Right ventricle myocardium inferior (tissue), 1 donor: ENCODE measurements at regions of chr11 and their contacts with region 1.

Region 1: GRCh38 chr11:29458252-29458651 is 558.6 kb downstream of the KCNA4 start:
- DNase-seq: no peak
- ATAC-seq: no peak

Region 2: GRCh38 chr11:28767574-28767973 is 690.7 kb before region 1 on chr11:
- intact Hi-C with region 1: no loop called
- DNase-seq: no peak
- ATAC-seq: no peak

Region 3: GRCh38 chr11:29534836-29535235 is 76.6 kb after region 1 on chr11:
- intact Hi-C with region 1: loop called (anchors 10 kb)
- DNase-seq: no peak
- ATAC-seq: no peak

Region 4: DNA sequence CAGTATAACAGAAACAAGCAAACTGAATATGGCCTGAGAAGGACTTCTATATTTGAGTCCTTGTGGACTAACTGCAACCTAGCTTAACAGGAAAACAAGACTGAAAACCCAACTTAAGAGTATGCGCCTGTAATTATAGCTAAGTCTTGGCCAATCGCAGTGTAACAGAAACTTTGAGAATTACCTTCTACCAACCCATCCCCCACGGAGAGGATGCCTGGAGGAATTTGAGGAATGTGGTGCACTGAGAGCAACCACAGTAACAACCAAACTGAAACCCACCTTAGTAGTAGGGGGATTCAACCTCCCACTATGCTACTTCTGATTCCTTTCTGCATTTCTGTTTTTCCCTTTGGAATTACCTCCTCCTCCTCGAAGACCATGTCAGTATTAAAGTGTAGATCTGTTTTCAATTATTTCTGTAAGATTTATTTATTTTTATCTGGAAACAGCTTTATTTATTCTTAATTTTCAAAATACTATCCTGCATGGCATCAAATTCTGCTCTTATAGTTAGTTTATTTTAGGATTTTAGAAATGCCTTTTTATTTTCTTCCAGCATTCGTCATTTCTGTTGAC is 165.0 kb after region 1 on chr11:
- intact Hi-C with region 1: no loop called
- DNase-seq: no peak
- ATAC-seq: no peak